ENCODE measurements at regions of chr12 and their contacts with region 1.

Region 1: GRCh38 chr12:113030875-113031525 is 25.5 kb upstream of the DTX1 start:
- DNase-seq: peak; percentile 26 to 76 (median 65)
- H3K4me3 ChIP-seq: no peak overlapping the region
- H3K27ac ChIP-seq: no peak overlapping the region
- H3K4me1 ChIP-seq: no peaks in the 10 kb centered on the region
- H3K27me3 ChIP-seq: no peaks in the 10 kb centered on the region
- CTCF ChIP-seq: peak; percentile 76 to 94 (median 86)
- POLR2A ChIP-seq: no peak

Region 2: DNA sequence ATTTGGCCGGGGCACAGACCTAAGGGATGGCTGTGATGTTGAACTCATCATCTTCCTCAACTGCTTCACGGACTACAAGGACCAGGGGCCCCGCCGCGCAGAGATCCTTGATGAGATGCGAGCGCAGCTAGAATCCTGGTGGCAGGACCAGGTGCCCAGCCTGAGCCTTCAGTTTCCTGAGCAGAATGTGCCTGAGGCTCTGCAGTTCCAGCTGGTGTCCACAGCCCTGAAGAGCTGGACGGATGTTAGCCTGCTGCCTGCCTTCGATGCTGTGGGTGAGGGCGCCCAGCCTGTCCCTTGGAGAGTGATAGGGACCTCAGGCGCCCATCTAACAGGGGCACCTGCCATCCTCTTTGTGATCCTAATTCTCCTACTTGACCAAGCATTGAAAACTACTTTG is 80.3 kb before region 1 on chr12:
- intact Hi-C with region 1: no loop called
- DNase-seq: peak in 2 of 7 donors; percentile 11 to 65
- H3K4me3 ChIP-seq: no peak overlapping the region
- H3K27ac ChIP-seq: no peak overlapping the region
- H3K4me1 ChIP-seq: no peaks in the 10 kb centered on the region
- H3K27me3 ChIP-seq: no peaks in the 10 kb centered on the region
- CTCF ChIP-seq: no peak
- POLR2A ChIP-seq: no peak

Region 3: GRCh38 chr12:112992541-112993398 is 38.2 kb before region 1 on chr12:
- intact Hi-C with region 1: loop called in 1 of 2 experiments (anchors 2 kb)
- DNase-seq: peak; percentile 57 to 88 (median 64)
- H3K4me3 ChIP-seq: no peak overlapping the region
- H3K27ac ChIP-seq: no peak overlapping the region
- H3K4me1 ChIP-seq: no peaks in the 10 kb centered on the region
- H3K27me3 ChIP-seq: no peaks in the 10 kb centered on the region
- CTCF ChIP-seq: peak; percentile 94 to 97 (median 96)
- POLR2A ChIP-seq: no peak

Region 4: DNA sequence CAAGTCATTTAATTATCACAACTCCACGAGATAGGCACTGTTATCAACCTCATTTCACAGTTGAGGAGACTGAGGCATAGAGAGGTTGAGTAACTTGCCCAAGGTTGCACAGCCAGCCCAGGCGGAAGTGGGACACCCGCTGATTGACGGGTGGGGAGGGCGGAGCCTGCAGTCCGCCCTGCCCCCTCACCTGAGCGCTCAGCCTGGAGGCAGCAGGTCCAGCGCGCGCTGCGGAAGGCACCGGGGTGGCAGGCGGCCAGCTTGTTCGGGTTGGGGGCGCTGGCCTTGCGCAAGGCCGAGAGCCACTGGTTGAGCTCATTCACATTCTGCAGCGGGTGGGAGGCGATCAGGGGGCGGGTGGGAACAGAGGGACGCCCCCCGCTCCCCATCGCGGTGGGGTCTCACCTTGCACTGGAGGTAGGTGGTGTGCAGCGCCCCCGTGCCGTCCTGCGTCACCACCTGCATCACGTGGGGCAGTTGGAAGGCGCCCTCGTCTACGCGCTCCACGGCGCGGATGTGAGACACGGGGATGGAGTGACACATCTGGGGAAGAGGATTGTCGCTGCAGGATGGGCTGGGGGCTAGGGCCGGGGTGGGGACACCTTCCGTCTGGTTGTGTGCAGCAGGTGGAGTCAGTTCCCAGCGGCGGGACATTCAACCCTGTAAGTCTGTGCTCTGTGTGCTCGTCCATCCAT is 72.9 kb after region 1 on chr12:
- intact Hi-C with region 1: no loop called
- DNase-seq: peak in 6 of 7 donors; percentile 34 to 59 (median 51)
- H3K4me3 ChIP-seq: peak overlapping the region in 1 of 4 donors; percentile 10
- H3K27ac ChIP-seq: peak overlapping the region in 1 of 5 donors; percentile 7
- H3K4me1 ChIP-seq: no peaks in the 10 kb centered on the region
- H3K27me3 ChIP-seq: no peaks in the 10 kb centered on the region
- CTCF ChIP-seq: no peak
- POLR2A ChIP-seq: no peak